GM12878 (cell line): ENCODE measurements at regions of chr1 and their contacts with region 1.

Region 1: GRCh38 chr1:109493805-109494539 is at the start of gene CYB561D1:
- DNase-seq: peak; percentile 55
- ATAC-seq: peak; percentile 94
- H3K4me3 ChIP-seq: peak within 1 kb of the TSS; percentile 82
- H3K27ac ChIP-seq: peak within 1 kb of the TSS; percentile 79
- H3K4me1 ChIP-seq: peaks cover 4% of the 10 kb centered on the region
- H3K27me3 ChIP-seq: no peaks in the 10 kb centered on the region
- CTCF ChIP-seq: peak; percentile 94 to 98 (median 95); a peak in 5 of 6 replicates
- EP300 ChIP-seq: 0 out of 4 replicates have a peak, but pooled peaks of 1 of the 2 experiments have one; percentile 14
- POLR2A ChIP-seq: peak; percentile 96
- RAD21 ChIP-seq: peak; percentile 41; the same call in 1 of the 2 replicates
- polyA plus RNA-seq, gene CYB561D1: 0.68 to 1.0 TPM

Region 2: GRCh38 chr1:109167001-109167506 is 326.9 kb before region 1 on chr1:
- CTCF ChIA-PET with region 1: no interaction called
- POLR2A ChIA-PET with region 1: no interaction called
- RAD21 ChIA-PET with region 1: no interaction called
- SMC1A ChIA-PET with region 1: no interaction called
- in situ Hi-C with region 1: no loop called
- intact Hi-C with region 1: no loop called
- DNase-seq: peak; percentile 74
- ATAC-seq: peak; percentile 80
- H3K4me3 ChIP-seq: no peak overlapping the region
- H3K27ac ChIP-seq: no peak overlapping the region
- H3K4me1 ChIP-seq: peaks cover 34% of the 10 kb centered on the region
- H3K27me3 ChIP-seq: no peaks in the 10 kb centered on the region
- CTCF ChIP-seq: no peak
- EP300 ChIP-seq: peak in 1 of 2 experiments; percentile 42; a peak in 1 of 4 replicates
- POLR2A ChIP-seq: no peak
- RAD21 ChIP-seq: no peak

Region 3: GRCh38 chr1:109467301-109467777 is 26.6 kb before region 1 on chr1:
- CTCF ChIA-PET with region 1: no interaction called
- POLR2A ChIA-PET with region 1: no interaction called
- RAD21 ChIA-PET with region 1: no interaction called
- SMC1A ChIA-PET with region 1: no interaction called
- in situ Hi-C with region 1: no loop called
- intact Hi-C with region 1: no loop called
- DNase-seq: no peak
- ATAC-seq: no peak
- H3K4me3 ChIP-seq: no peak overlapping the region
- H3K27ac ChIP-seq: no peak overlapping the region
- H3K4me1 ChIP-seq: no peaks in the 10 kb centered on the region
- H3K27me3 ChIP-seq: peaks cover 4 to 7% of the 10 kb centered on the region in 2 experiments; a peak in 3 of 4 replicates
- CTCF ChIP-seq: no peak
- EP300 ChIP-seq: no peak
- POLR2A ChIP-seq: no peak
- RAD21 ChIP-seq: no peak

Region 4: DNA sequence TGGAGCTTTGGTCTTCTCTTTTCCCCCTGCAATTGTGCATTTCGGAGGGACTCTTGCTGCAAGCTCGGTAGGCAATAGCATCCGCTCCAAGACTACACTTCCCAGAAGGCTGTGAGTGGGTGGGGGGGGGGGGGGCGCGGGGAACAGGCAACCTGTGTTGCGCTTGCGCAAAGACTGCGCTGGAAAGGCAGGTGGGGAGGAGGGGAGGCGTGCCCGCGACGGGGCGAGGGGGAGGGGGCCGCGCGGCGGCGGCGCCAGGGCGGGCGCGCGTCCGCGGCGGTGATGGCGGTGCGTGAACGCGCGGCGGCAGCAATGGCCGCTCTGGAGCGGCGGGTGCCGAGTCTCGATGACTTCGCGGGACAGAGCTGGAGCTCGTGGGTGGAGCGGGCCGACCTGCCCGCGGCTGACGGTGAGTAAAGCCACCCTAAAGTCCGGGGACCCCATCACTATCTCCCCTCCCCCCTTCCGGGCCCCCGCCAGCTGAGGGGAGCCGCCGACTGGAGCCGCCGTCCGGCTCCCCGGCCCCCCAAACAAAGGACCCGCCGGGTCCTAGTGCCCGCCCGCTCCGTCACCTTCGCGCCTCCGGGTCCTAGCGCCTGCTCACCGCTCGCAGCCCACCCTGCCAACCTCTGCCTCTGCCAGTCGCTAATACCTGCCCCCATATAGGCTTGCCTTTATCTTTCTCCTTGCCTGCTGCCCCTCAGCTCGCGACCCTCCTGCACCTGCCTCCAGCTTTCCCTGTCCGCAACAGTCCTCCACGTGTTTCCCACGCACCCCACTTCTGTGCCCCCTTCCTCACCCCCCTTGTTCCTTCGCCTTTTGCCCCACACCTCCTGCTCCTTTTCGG is 10.1 kb before region 1 on chr1 and contains the start of gene ATXN7L2:
- CTCF ChIA-PET with region 1: interaction called, 53 read pairs
- POLR2A ChIA-PET with region 1: interaction called, 7 read pairs
- RAD21 ChIA-PET with region 1: no interaction called
- SMC1A ChIA-PET with region 1: interaction called, 7 read pairs
- in situ Hi-C with region 1: no loop called
- intact Hi-C with region 1: no loop called
- DNase-seq: peak; percentile 42
- ATAC-seq: peak; percentile 86
- H3K4me3 ChIP-seq: peak within 1 kb of the TSS; percentile 74
- H3K27ac ChIP-seq: peak within 1 kb of the TSS; percentile 73
- H3K4me1 ChIP-seq: peaks cover 10% of the 10 kb centered on the region
- H3K27me3 ChIP-seq: peaks cover 0 to 3% of the 10 kb centered on the region in 2 experiments; a peak in 3 of 4 replicates
- CTCF ChIP-seq: no peak; a peak in 1 of 6 replicates
- EP300 ChIP-seq: 0 out of 4 replicates have a peak, but pooled peaks of 1 of the 2 experiments have one; percentile 0
- POLR2A ChIP-seq: peak; percentile 91
- RAD21 ChIP-seq: no peak
- polyA plus RNA-seq, gene ATXN7L2: 0.27 to 0.80 TPM

Region 5: DNA sequence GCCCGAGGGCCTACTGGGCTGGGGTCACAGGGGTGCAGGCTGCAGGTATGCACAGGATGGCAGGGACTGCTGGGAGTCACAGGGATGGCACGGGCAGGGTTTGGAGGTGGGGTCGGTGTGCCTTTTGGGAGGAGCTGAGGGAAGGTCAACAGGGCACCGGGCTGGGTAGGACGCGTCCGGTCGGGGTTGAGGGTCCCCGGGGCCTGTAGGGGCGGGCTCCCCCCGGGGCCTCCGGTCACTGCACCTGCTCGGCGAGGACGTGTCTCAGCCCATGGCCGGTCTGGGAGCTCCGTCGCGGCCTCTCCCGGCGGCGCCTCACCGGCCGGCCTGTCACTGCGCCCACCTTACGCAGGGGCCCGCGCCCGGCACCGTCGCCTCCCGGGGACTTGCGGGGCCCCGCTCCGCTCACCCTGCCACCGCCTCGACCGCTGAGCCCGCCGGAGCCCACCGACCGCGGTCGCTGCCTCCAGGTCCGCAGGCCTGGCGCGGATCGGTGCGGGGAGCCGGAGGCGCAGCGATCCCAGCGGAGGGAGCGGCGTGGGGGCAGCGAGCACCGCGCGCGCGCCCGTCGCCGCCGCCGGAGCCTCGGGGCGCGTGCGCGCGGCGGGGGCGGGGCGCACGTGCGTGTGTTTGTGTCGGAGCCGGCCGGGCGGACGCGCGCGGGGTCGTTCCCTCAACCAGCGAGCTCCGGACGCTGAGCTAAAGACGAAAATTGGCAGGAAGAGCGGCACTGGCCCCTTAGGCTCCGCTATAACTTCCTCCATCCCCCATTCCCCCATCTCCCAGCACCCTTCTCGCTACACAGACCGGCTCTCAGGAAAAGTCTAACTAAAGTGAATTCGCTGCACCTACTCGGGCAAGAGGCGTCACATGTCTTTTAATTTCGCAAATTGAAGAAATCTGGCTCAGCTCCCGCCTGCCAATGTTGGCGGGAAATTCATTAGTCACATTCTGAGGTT is 15.5 kb after region 1 on chr1 and contains the start of gene AMIGO1:
- CTCF ChIA-PET with region 1: interaction called, 240 read pairs
- POLR2A ChIA-PET with region 1: interaction called, 3 read pairs
- RAD21 ChIA-PET with region 1: interaction called, 4 read pairs
- SMC1A ChIA-PET with region 1: interaction called, 5 read pairs
- in situ Hi-C with region 1: no loop called
- intact Hi-C with region 1: no loop called
- DNase-seq: no peak
- ATAC-seq: peak; percentile 57
- H3K4me3 ChIP-seq: peak within 1 kb of the TSS; percentile 69
- H3K27ac ChIP-seq: no peak within 1 kb of the TSS
- H3K4me1 ChIP-seq: 0 out of 2 replicates have a peak, but pooled peaks cover 3% of the 10 kb centered on the region
- H3K27me3 ChIP-seq: no peaks in the 10 kb centered on the region
- CTCF ChIP-seq: no peak
- EP300 ChIP-seq: no peak
- POLR2A ChIP-seq: no peak
- RAD21 ChIP-seq: no peak
- polyA plus RNA-seq, gene AMIGO1: 0.02 to 0.11 TPM

Region 6: DNA sequence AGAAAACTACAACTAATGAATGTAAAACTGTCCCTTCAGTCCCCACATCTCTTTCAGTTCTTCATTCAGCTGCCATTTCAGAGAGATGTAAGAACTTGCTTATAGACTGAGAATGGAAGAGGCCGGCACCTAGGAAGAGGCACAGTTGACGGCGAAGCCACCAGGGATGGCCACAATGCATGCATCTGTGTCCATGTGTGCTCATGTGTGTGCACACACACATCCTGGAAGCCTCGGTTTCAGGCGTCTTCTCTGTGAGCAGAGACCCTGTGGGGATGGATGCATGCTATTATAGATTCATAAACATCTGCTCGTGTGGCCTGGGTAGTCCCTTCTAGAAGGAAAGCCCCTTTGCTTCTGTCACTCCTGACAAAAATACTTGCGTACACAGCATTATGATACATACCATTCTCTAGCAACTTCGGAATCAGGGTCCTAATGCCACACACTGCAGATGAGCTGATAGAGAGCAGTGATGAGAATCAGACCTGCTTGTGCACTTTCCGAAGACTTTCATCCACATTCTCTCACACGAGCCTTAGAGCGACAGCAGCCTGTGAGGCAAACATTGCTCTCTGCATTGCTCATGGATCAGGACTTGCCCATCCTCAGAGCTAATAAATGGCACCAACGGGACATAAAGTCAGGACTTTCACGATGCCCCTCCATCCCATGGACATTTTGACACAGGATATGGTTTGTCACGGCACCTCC is 33.3 kb after region 1 on chr1:
- CTCF ChIA-PET with region 1: interaction called, 1,280 read pairs
- POLR2A ChIA-PET with region 1: interaction called, 17 read pairs
- RAD21 ChIA-PET with region 1: interaction called, 422 read pairs
- SMC1A ChIA-PET with region 1: interaction called, 431 read pairs
- in situ Hi-C with region 1: loop called (anchors 5 kb)
- intact Hi-C with region 1: loop called (anchors 1 kb)
- DNase-seq: no peak
- ATAC-seq: peak; percentile 87
- H3K4me3 ChIP-seq: no peak overlapping the region
- H3K27ac ChIP-seq: peak overlapping the region; percentile 28; the same call in 1 of the 2 replicates
- H3K4me1 ChIP-seq: peaks cover 19% of the 10 kb centered on the region
- H3K27me3 ChIP-seq: peaks cover 0 to 2% of the 10 kb centered on the region in 2 experiments; a peak in 1 of 4 replicates
- CTCF ChIP-seq: no peak
- EP300 ChIP-seq: peak in 1 of 2 experiments; percentile 60; a peak in 1 of 4 replicates
- POLR2A ChIP-seq: no peak
- RAD21 ChIP-seq: no peak

Region 7: GRCh38 chr1:109620841-109621286 is 126.9 kb after region 1 on chr1:
- CTCF ChIA-PET with region 1: interaction called, 4 read pairs
- POLR2A ChIA-PET with region 1: no interaction called
- RAD21 ChIA-PET with region 1: interaction called, 3 read pairs
- SMC1A ChIA-PET with region 1: no interaction called
- in situ Hi-C with region 1: loop called (anchors 5 kb)
- intact Hi-C with region 1: loop called (anchors 5 kb)
- DNase-seq: peak; percentile 66
- ATAC-seq: peak; percentile 81
- H3K4me3 ChIP-seq: peak overlapping the region; percentile 85
- H3K27ac ChIP-seq: peak overlapping the region; percentile 72
- H3K4me1 ChIP-seq: peaks cover 41% of the 10 kb centered on the region
- H3K27me3 ChIP-seq: no peaks in the 10 kb centered on the region
- CTCF ChIP-seq: no peak
- EP300 ChIP-seq: no peak
- POLR2A ChIP-seq: peak; percentile 52; the same call in 1 of the 2 replicates
- RAD21 ChIP-seq: no peak